Heart right ventricle (tissue), 16 donors: ENCODE measurements at regions of chr7 and their contacts with region 1.

Region 1: DNA sequence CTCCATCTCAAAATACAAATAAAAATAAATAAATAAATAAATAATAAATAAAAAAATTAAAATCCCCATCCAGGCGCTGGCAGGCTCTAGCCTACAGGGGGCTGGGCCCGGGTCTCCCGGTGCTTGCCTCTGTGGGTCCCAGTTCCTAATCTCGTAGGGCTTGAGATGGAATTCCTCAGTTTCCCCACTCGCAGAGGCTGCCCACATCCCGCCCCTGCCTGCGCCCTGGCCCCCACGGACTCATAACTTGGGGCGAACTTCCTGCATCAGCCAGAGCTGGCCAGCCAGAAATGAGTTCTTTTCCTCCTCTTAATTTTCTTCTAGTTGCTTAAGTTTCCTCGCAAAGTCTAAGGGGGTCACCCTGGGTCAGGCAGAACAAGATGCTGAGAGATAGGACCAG is 22.0 kb upstream of the SRRM3 start:
- DNase-seq: no peak
- ATAC-seq: no peak
- H3K4me3 ChIP-seq: no peak overlapping the region
- H3K27ac ChIP-seq: no peak overlapping the region
- H3K4me1 ChIP-seq: peaks cover 0 to 10% (median 2%) of the 10 kb centered on the region in 9 donors
- H3K27me3 ChIP-seq: no peaks in the 10 kb centered on the region
- CTCF ChIP-seq: no peak

Region 2: GRCh38 chr7:76262683-76263402 is 83.2 kb after region 1 on chr7:
- intact Hi-C with region 1: loop called in 5 of 10 experiments (anchors 5 kb)
- DNase-seq: peak in 1 of 2 donors; percentile 49
- ATAC-seq: peak in 7 of 8 donors; percentile 72 to 83 (median 78)
- H3K4me3 ChIP-seq: no peak overlapping the region
- H3K27ac ChIP-seq: no peak overlapping the region
- H3K4me1 ChIP-seq: peaks cover 4 to 17% (median 15%) of the 10 kb centered on the region in 9 donors
- H3K27me3 ChIP-seq: peaks cover 11 to 60% (median 51%) of the 10 kb centered on the region in 7 donors
- CTCF ChIP-seq: peak; percentile 17 to 72 (median 66)

Region 3: GRCh38 chr7:76282344-76283253 is 102.9 kb after region 1 on chr7:
- intact Hi-C with region 1: loop called in 4 of 10 experiments (anchors 10 kb)
- DNase-seq: peak in 1 of 2 donors; percentile 59
- ATAC-seq: peak; percentile 18 to 75 (median 64)
- H3K4me3 ChIP-seq: peak overlapping the region in 9 of 10 donors; percentile 45 to 57 (median 47)
- H3K27ac ChIP-seq: peak overlapping the region in 1 of 10 donors; percentile 29
- H3K4me1 ChIP-seq: peaks cover 0 to 5% (median 0%) of the 10 kb centered on the region in 9 donors
- H3K27me3 ChIP-seq: peaks cover 3 to 65% (median 31%) of the 10 kb centered on the region in 7 donors
- CTCF ChIP-seq: no peak

Region 4: GRCh38 chr7:76291343-76292212 is 111.9 kb after region 1 on chr7:
- intact Hi-C with region 1: loop called in 5 of 10 experiments (anchors 1 to 10 kb)
- DNase-seq: peak; percentile 89 to 91
- ATAC-seq: peak; percentile 69 to 85 (median 76)
- H3K4me3 ChIP-seq: peak overlapping the region in 9 of 10 donors; percentile 6 to 47 (median 39)
- H3K27ac ChIP-seq: peak overlapping the region; percentile 84 to 98 (median 94)
- H3K4me1 ChIP-seq: peaks cover 21 to 50% (median 44%) of the 10 kb centered on the region in 9 donors
- H3K27me3 ChIP-seq: no peaks in the 10 kb centered on the region
- CTCF ChIP-seq: peak; percentile 95 to 99 (median 97)